ENCODE measurements at regions of chr12 and their contacts with region 1.

Region 1: GRCh38 chr12:46391630-46392029 is 19.1 kb upstream of the SLC38A2 start:
- DNase-seq: no peak
- H3K4me3 ChIP-seq: no peak overlapping the region
- H3K27ac ChIP-seq: no peak overlapping the region
- H3K4me1 ChIP-seq: peaks cover 6 to 30% (median 19%) of the 10 kb centered on the region in 4 experiments
- H3K27me3 ChIP-seq: no peaks in the 10 kb centered on the region
- CTCF ChIP-seq: no peak
- EP300 ChIP-seq: no peak
- POLR2A ChIP-seq: no peak
- RAD21 ChIP-seq: no peak

Region 2: GRCh38 chr12:46357438-46358324 is 33.9 kb before region 1 on chr12:
- CTCF ChIA-PET with region 1: no interaction called
- POLR2A ChIA-PET with region 1: interaction called, 233 read pairs
- DNase-seq: no peak
- H3K4me3 ChIP-seq: no peak overlapping the region
- H3K27ac ChIP-seq: no peak overlapping the region; the same call in 1 of the 2 replicates
- H3K4me1 ChIP-seq: no peaks in the 10 kb centered on the region
- H3K27me3 ChIP-seq: no peaks in the 10 kb centered on the region
- CTCF ChIP-seq: no peak
- EP300 ChIP-seq: no peak
- POLR2A ChIP-seq: peak; percentile 51 to 83
- RAD21 ChIP-seq: no peak

Region 3: GRCh38 chr12:46364777-46365580 is 26.7 kb before region 1 on chr12:
- CTCF ChIA-PET with region 1: no interaction called
- POLR2A ChIA-PET with region 1: interaction called, 233 read pairs
- DNase-seq: no peak
- H3K4me3 ChIP-seq: no peak overlapping the region
- H3K27ac ChIP-seq: no peak overlapping the region
- H3K4me1 ChIP-seq: peaks cover 0 to 7% (median 1%) of the 10 kb centered on the region in 4 experiments; a peak in 2 of 7 replicates
- H3K27me3 ChIP-seq: no peaks in the 10 kb centered on the region
- CTCF ChIP-seq: no peak
- EP300 ChIP-seq: no peak
- POLR2A ChIP-seq: peak; percentile 16 to 35; a peak in 1 of 3 replicates
- RAD21 ChIP-seq: no peak

Measured in H1 (cell line).